HepG2 (cell line): ENCODE measurements at regions of chr9 and their contacts with region 1.

Region 1: GRCh38 chr9:78035383-78035993 is 3.9 kb upstream of the GNAQ start:
- DNase-seq: peak; percentile 69
- ATAC-seq: peak; percentile 13; the same call in 1 of the 3 replicates
- H3K4me3 ChIP-seq: peak overlapping the region in 1 of 3 experiments; percentile 29; a peak in 1 of 6 replicates
- H3K27ac ChIP-seq: no peak overlapping the region
- H3K4me1 ChIP-seq: peaks cover 26% of the 10 kb centered on the region
- H3K27me3 ChIP-seq: peaks cover 1 to 7% of the 10 kb centered on the region in 2 experiments; a peak in 3 of 5 replicates
- CTCF ChIP-seq: peak; percentile 83
- EP300 ChIP-seq: no peak
- POLR2A ChIP-seq: no peak
- RAD21 ChIP-seq: peak; percentile 81

Region 2: GRCh38 chr9:77433675-77434445 is 601.6 kb before region 1 on chr9:
- CTCF ChIA-PET with region 1: no interaction called
- POLR2A ChIA-PET with region 1: no interaction called
- in situ Hi-C with region 1: no loop called
- intact Hi-C with region 1: loop called (anchors 5 kb)
- DNase-seq: peak; percentile 48
- ATAC-seq: peak; percentile 95
- H3K4me3 ChIP-seq: peak overlapping the region; percentile 3 to 52 (median 10); a peak in 3 of 6 replicates
- H3K27ac ChIP-seq: no peak overlapping the region
- H3K4me1 ChIP-seq: peaks cover 21% of the 10 kb centered on the region; the same call in 1 of the 2 replicates
- H3K27me3 ChIP-seq: peaks cover 2 to 14% of the 10 kb centered on the region in 2 experiments; a peak in 4 of 5 replicates
- CTCF ChIP-seq: peak; percentile 94
- EP300 ChIP-seq: no peak
- POLR2A ChIP-seq: no peak
- RAD21 ChIP-seq: peak; percentile 68; the same call in 1 of the 2 replicates

Region 3: GRCh38 chr9:77807281-77807683 is 228.2 kb before region 1 on chr9:
- CTCF ChIA-PET with region 1: no interaction called
- POLR2A ChIA-PET with region 1: interaction called, 3 read pairs
- in situ Hi-C with region 1: no loop called
- intact Hi-C with region 1: loop called (anchors 2 kb)
- DNase-seq: peak; percentile 84
- ATAC-seq: peak; percentile 60
- H3K4me3 ChIP-seq: peak overlapping the region in 2 of 3 experiments; percentile 4 to 34; a peak in 1 of 6 replicates
- H3K27ac ChIP-seq: peak overlapping the region; percentile 93
- H3K4me1 ChIP-seq: peaks cover 58% of the 10 kb centered on the region
- H3K27me3 ChIP-seq: no peaks in the 10 kb centered on the region
- CTCF ChIP-seq: no peak
- EP300 ChIP-seq: peak in 1 of 2 experiments; percentile 23; a peak in 1 of 4 replicates
- POLR2A ChIP-seq: no peak
- RAD21 ChIP-seq: 0 out of 2 replicates have a peak, but pooled peaks have one; percentile 14

Region 4: GRCh38 chr9:77987081-77987656 is 48.3 kb before region 1 on chr9:
- CTCF ChIA-PET with region 1: no interaction called
- POLR2A ChIA-PET with region 1: no interaction called
- in situ Hi-C with region 1: loop called (anchors 5 kb)
- intact Hi-C with region 1: no loop called
- DNase-seq: no peak
- ATAC-seq: no peak
- H3K4me3 ChIP-seq: no peak overlapping the region
- H3K27ac ChIP-seq: no peak overlapping the region
- H3K4me1 ChIP-seq: peaks cover 41% of the 10 kb centered on the region
- H3K27me3 ChIP-seq: no peaks in the 10 kb centered on the region
- CTCF ChIP-seq: no peak
- EP300 ChIP-seq: no peak
- POLR2A ChIP-seq: no peak
- RAD21 ChIP-seq: no peak

Region 5: GRCh38 chr9:78213712-78214111 is 178.2 kb after region 1 on chr9:
- CTCF ChIA-PET with region 1: no interaction called
- POLR2A ChIA-PET with region 1: no interaction called
- in situ Hi-C with region 1: loop called (anchors 10 kb)
- intact Hi-C with region 1: no loop called
- DNase-seq: peak; percentile 5
- ATAC-seq: peak; percentile 77
- H3K4me3 ChIP-seq: no peak overlapping the region
- H3K27ac ChIP-seq: no peak overlapping the region
- H3K4me1 ChIP-seq: no peaks in the 10 kb centered on the region
- H3K27me3 ChIP-seq: peaks cover 1 to 9% of the 10 kb centered on the region in 2 experiments; a peak in 1 of 5 replicates
- CTCF ChIP-seq: peak; percentile 44; the same call in 1 of the 2 replicates
- EP300 ChIP-seq: no peak
- POLR2A ChIP-seq: no peak
- RAD21 ChIP-seq: no peak

Region 6: DNA sequence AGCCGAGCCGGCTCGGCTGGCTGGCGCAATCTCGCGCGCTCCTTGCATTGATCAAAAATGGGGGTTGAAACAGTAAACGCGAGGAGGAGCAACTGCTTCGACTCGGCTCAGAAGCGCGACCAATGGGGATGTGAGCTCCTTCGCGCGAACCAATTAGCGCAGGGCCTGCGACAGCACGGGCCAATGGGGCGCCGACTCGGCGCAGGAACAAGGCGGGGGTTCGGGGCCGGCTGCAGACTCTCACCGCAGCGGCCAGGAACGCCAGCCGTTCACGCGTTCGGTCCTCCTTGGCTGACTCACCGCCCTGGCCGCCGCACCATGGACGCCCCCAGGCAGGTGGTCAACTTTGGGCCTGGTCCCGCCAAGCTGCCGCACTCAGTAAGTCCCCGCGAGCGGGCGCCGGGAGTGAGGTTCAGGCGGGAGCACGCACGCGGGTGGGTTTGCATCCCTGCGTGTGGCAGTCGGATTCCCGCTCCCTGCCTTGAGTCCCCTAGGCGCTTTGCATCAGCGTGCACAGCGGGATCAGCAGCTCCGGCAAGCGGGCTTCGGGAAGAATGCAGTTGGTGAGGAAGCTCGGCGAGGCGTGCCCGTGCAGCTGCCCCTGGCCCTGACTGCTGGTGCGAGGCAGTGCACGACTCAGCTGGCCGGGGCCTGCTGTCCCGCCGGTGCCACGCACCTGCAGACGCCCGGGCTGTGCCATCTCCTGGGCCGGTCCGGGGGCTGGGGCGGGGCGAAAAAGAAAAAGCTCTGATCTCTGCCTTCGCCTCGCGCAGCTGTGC is 261.6 kb after region 1 on chr9 and contains the start of gene PSAT1:
- CTCF ChIA-PET with region 1: no interaction called
- POLR2A ChIA-PET with region 1: interaction called, 3 read pairs
- in situ Hi-C with region 1: no loop called
- intact Hi-C with region 1: loop called (anchors 10 kb)
- DNase-seq: peak; percentile 94
- ATAC-seq: peak; percentile 94
- H3K4me3 ChIP-seq: peak within 1 kb of the TSS; percentile 88 to 95 (median 95)
- H3K27ac ChIP-seq: peak within 1 kb of the TSS; percentile 97
- H3K4me1 ChIP-seq: peaks cover 75% of the 10 kb centered on the region
- H3K27me3 ChIP-seq: no peaks in the 10 kb centered on the region; a peak in 2 of 5 replicates
- CTCF ChIP-seq: 0 out of 2 replicates have a peak, but pooled peaks have one; percentile 10
- EP300 ChIP-seq: no peak; a peak in 1 of 4 replicates
- POLR2A ChIP-seq: peak; percentile 87 to 98
- RAD21 ChIP-seq: no peak; the same call in none of the 2 replicates
- total RNA-seq, gene PSAT1: 135 and 262 TPM in 2 replicates